ENCODE measurements at regions of chr20 and their contacts with region 1.

Region 1: DNA sequence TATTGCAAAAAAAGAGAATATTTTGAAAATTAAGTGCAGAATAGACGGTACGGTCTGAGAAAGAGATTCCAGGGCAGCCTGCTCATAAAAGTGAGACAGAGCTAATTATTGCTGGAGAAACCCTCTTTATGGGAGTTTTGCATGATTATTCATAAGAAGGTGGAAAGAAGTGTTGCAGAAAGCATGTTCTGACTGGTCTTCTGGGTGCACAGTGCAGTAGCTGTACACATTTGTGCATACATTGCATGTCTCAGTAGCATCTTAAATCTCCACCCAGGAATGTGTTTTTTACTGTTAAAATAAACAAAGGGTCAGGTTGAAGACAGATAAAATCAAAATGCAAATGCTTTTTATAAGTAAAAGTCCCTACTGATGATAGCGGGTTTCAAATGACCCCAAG is 1813.6 kb upstream of the DEFB115 start:
- DNase-seq: no peak
- H3K4me3 ChIP-seq: no peak overlapping the region
- H3K4me3 Mint-ChIP-seq: no peak overlapping the region
- H3K27ac Mint-ChIP-seq: no peak overlapping the region
- H3K4me1 ChIP-seq: peaks cover 21% of the 10 kb centered on the region
- H3K4me1 Mint-ChIP-seq: peaks cover 18% of the 10 kb centered on the region
- H3K27me3 ChIP-seq: no peaks in the 10 kb centered on the region
- H3K27me3 Mint-ChIP-seq: no peaks in the 10 kb centered on the region
- CTCF ChIP-seq: no peak

Region 2: DNA sequence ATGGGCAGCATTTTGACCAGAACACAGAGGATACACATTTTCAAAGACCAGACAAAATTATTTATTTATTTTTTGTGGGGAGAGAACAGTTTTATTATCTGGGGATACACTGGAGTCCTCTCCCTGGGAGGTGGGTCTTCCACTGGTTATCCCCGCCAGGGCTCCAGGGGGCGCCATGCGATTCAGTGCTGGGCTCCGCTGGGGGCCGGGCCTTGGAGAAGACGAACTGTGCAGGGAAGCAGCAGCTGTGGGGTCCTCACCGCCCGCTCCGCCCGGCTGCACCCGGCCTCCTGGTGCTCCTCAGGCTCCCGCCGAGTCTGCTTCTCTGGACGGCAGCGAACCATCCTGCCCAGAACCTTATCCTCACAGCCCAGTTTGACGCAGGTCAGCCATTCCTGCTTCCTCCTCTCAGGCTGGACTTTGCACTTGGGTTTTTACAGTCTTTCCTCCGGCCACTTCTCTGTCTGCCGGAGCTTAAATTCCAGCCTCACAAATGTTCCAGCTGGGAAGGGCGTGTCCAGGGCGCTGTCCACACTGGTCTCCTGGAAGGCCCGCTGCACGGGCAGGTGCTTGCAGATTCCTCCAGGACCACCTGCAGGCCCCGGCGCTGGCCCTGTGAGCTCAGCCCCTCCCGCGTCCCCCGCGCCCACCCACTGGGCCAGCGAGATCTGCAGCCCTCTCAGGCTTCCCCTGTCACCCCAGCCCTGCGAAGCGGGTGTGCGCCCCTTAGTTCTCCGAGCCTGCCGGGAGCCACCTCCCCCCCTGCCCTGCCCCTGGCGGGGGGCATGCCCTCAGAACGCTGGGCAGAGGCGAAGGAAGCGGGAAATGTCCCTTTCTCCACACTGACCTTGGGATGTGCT is 16.4 kb before region 1 on chr20:
- CTCF ChIA-PET with region 1: no interaction called
- POLR2A ChIA-PET with region 1: no interaction called
- intact Hi-C with region 1: loop called (anchors 1 kb)
- DNase-seq: peak; percentile 84 to 88
- H3K4me3 ChIP-seq: peak overlapping the region; percentile 43
- H3K4me3 Mint-ChIP-seq: peak overlapping the region; percentile 88
- H3K27ac Mint-ChIP-seq: peak overlapping the region; percentile 70
- H3K4me1 ChIP-seq: no peaks in the 10 kb centered on the region
- H3K4me1 Mint-ChIP-seq: no peaks in the 10 kb centered on the region
- H3K27me3 ChIP-seq: no peaks in the 10 kb centered on the region
- H3K27me3 Mint-ChIP-seq: peaks cover 5% of the 10 kb centered on the region
- CTCF ChIP-seq: peak; percentile 74 to 85

Region 3: DNA sequence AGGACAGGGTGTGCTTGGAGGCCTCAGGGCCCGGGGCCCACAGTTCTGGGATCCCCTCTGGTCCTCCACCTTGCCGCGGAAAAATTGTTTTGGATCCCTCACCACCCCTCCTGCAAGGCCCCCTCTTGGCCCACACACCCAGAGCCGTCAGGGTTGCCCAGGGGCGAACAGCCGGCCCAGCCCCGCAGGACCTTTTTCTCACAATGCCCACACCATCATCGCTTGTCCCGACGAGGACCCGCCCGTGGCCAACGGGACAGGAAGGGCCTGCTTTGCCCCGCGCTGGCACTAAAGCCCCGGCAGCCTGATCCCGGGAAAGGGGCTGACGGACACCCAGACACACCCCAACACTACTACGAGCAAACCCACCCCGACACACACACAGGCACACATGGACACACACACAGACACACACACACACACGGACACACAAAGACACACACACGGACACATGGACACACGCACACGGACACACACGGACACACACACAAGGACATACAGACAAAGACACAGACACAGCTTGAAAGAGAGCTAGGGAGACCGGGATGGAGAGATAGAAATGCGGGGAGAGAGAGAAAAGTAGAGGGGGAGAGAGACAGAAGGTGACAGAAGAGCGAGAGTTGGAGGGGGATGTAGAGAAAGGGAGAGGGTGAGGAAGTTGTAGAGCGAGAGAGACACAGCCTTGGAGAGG is 320.1 kb after region 1 on chr20:
- CTCF ChIA-PET with region 1: no interaction called
- POLR2A ChIA-PET with region 1: no interaction called
- intact Hi-C with region 1: loop called (anchors 2 kb)
- DNase-seq: no peak
- H3K4me3 ChIP-seq: no peak overlapping the region
- H3K4me3 Mint-ChIP-seq: no peak overlapping the region
- H3K27ac Mint-ChIP-seq: no peak overlapping the region
- H3K4me1 ChIP-seq: no peaks in the 10 kb centered on the region
- H3K4me1 Mint-ChIP-seq: no peaks in the 10 kb centered on the region
- H3K27me3 ChIP-seq: no peaks in the 10 kb centered on the region
- H3K27me3 Mint-ChIP-seq: no peaks in the 10 kb centered on the region
- CTCF ChIP-seq: no peak

Region 4: DNA sequence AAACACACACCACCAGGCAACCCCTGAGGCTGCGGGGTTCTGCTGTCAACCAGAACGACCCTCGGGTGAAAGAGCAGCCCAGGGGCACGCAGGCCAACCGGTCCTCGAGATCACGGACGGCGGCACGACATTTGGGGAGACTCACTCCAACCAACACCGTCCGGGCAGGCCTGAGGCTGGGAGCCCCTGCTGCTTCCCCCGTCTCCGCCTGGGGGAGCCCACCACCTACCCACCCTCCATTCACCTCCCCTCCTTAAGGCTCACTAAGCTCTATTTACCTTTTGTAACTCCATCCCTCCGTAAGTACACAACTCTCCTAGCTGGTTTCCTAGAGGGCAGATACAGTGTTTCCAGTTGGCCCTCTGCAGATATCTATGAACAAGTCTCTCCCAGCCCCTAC is 842.3 kb after region 1 on chr20:
- CTCF ChIA-PET with region 1: no interaction called
- POLR2A ChIA-PET with region 1: no interaction called
- intact Hi-C with region 1: loop called (anchors 10 kb)
- DNase-seq: peak; percentile 77 to 81
- H3K4me3 ChIP-seq: no peak overlapping the region
- H3K4me3 Mint-ChIP-seq: no peak overlapping the region
- H3K27ac Mint-ChIP-seq: no peak overlapping the region
- H3K4me1 ChIP-seq: peaks cover 33% of the 10 kb centered on the region
- H3K4me1 Mint-ChIP-seq: peaks cover 35% of the 10 kb centered on the region
- H3K27me3 ChIP-seq: no peaks in the 10 kb centered on the region
- H3K27me3 Mint-ChIP-seq: no peaks in the 10 kb centered on the region
- CTCF ChIP-seq: peak; percentile 68 to 81

Region 5: GRCh38 chr20:31260326-31260932 is 1816.6 kb after region 1 on chr20:
- CTCF ChIA-PET with region 1: no interaction called
- POLR2A ChIA-PET with region 1: no interaction called
- intact Hi-C with region 1: loop called (anchors 2 kb)
- DNase-seq: peak; percentile 63 to 75
- H3K4me3 ChIP-seq: no peak overlapping the region
- H3K4me3 Mint-ChIP-seq: no peak overlapping the region
- H3K27ac Mint-ChIP-seq: no peak overlapping the region
- H3K4me1 ChIP-seq: no peaks in the 10 kb centered on the region
- H3K4me1 Mint-ChIP-seq: no peaks in the 10 kb centered on the region
- H3K27me3 ChIP-seq: 0 out of 2 replicates have a peak, but pooled peaks cover 2% of the 10 kb centered on the region
- H3K27me3 Mint-ChIP-seq: peaks cover 3% of the 10 kb centered on the region
- CTCF ChIP-seq: peak; percentile 91 to 96

Region 6: GRCh38 chr20:31308535-31309162 is 1864.8 kb after region 1 on chr20 and contains the start of gene DEFB116:
- CTCF ChIA-PET with region 1: no interaction called
- POLR2A ChIA-PET with region 1: no interaction called
- intact Hi-C with region 1: loop called (anchors 2 kb)
- DNase-seq: no peak
- H3K4me3 ChIP-seq: no peak within 1 kb of the TSS
- H3K4me3 Mint-ChIP-seq: no peak within 1 kb of the TSS
- H3K27ac Mint-ChIP-seq: no peak within 1 kb of the TSS
- H3K4me1 ChIP-seq: no peaks in the 10 kb centered on the region
- H3K4me1 Mint-ChIP-seq: no peaks in the 10 kb centered on the region
- H3K27me3 ChIP-seq: no peaks in the 10 kb centered on the region
- H3K27me3 Mint-ChIP-seq: no peaks in the 10 kb centered on the region
- CTCF ChIP-seq: no peak
- total RNA-seq, gene DEFB116: not detected in 2 replicates